Caco-2 (cell line): ENCODE measurements at regions of chr10 and their contacts with region 1.

Region 1: GRCh38 chr10:110893559-110894179 is 21.9 kb downstream of the PDCD4 start:
- DNase-seq: peak in 1 of 2 experiments; percentile 29
- H3K4me3 ChIP-seq: no peak overlapping the region
- H3K4me3 Mint-ChIP-seq: no peak overlapping the region
- H3K27ac Mint-ChIP-seq: no peak overlapping the region
- H3K4me1 ChIP-seq: peaks cover 7% of the 10 kb centered on the region; the same call in 1 of the 2 replicates
- H3K4me1 Mint-ChIP-seq: peaks cover 17% of the 10 kb centered on the region
- H3K27me3 ChIP-seq: no peaks in the 10 kb centered on the region
- H3K27me3 Mint-ChIP-seq: no peaks in the 10 kb centered on the region
- CTCF ChIP-seq: peak; percentile 35 to 48

Region 2: GRCh38 chr10:110803830-110804338 is 89.8 kb before region 1 on chr10:
- CTCF ChIA-PET with region 1: interaction called, 18 read pairs
- POLR2A ChIA-PET with region 1: no interaction called
- intact Hi-C with region 1: loop called (anchors 1 kb)
- DNase-seq: peak; percentile 55 to 72
- H3K4me3 ChIP-seq: no peak overlapping the region
- H3K4me3 Mint-ChIP-seq: no peak overlapping the region
- H3K27ac Mint-ChIP-seq: peak overlapping the region; percentile 68
- H3K4me1 ChIP-seq: peaks cover 6% of the 10 kb centered on the region
- H3K4me1 Mint-ChIP-seq: peaks cover 13% of the 10 kb centered on the region
- H3K27me3 ChIP-seq: no peaks in the 10 kb centered on the region
- H3K27me3 Mint-ChIP-seq: peaks cover 3% of the 10 kb centered on the region
- CTCF ChIP-seq: peak; percentile 55 to 92

Region 3: DNA sequence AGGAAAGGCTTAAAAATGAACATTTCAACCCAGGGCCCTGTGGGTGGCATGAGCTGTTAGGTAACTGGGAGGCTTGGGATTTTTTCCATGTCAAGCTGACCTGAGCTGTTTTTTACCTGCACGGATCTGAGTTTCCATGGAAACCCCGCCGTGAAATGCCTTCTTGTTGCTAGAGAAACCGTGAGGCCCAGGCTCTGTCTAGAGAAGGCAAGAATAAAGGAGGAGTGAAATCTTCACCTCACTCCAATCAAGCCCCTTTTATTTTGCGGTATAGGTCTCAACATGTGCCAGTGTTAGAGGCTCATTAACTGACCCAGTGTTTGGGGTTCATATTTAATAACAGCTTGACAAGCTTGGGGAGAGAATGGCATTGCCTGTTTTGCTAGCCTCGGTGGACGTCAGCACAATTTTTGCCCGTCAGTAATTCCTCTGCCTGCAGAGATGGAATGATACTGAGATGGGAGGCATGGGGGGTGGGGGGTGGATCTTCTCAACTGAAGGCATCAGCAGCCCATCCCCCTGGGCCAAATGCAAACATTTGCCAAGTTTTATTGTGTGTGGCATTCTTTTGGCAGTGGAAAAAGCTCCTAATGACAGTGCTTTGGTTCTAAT is 70.9 kb before region 1 on chr10:
- CTCF ChIA-PET with region 1: interaction called, 4 read pairs
- POLR2A ChIA-PET with region 1: no interaction called
- intact Hi-C with region 1: loop called (anchors 2 kb)
- DNase-seq: peak in 1 of 2 experiments; percentile 55
- H3K4me3 ChIP-seq: no peak overlapping the region
- H3K4me3 Mint-ChIP-seq: no peak overlapping the region
- H3K27ac Mint-ChIP-seq: peak overlapping the region; percentile 6
- H3K4me1 ChIP-seq: 0 out of 2 replicates have a peak, but pooled peaks cover 3% of the 10 kb centered on the region
- H3K4me1 Mint-ChIP-seq: peaks cover 15% of the 10 kb centered on the region
- H3K27me3 ChIP-seq: no peaks in the 10 kb centered on the region
- H3K27me3 Mint-ChIP-seq: no peaks in the 10 kb centered on the region
- CTCF ChIP-seq: no peak